ENCODE measurements at regions of chr6 and their contacts with region 1.

Region 1: GRCh38 chr6:24933868-24934401 is 1.8 kb downstream of the RIPOR2 start:
- DNase-seq: peak; percentile 68
- H3K4me3 Mint-ChIP-seq: peak overlapping the region; percentile 92
- H3K27ac Mint-ChIP-seq: peak overlapping the region; percentile 99
- H3K4me1 Mint-ChIP-seq: peaks cover 58% of the 10 kb centered on the region
- H3K27me3 Mint-ChIP-seq: no peaks in the 10 kb centered on the region

Region 2: GRCh38 chr6:24899997-24900325 is 34.0 kb before region 1 on chr6:
- CTCF ChIA-PET with region 1: interaction called, 16 read pairs
- POLR2A ChIA-PET with region 1: interaction called, 4 read pairs
- DNase-seq: peak; percentile 39
- H3K4me3 Mint-ChIP-seq: peak overlapping the region; percentile 33
- H3K27ac Mint-ChIP-seq: peak overlapping the region; percentile 66
- H3K4me1 Mint-ChIP-seq: peaks cover 82% of the 10 kb centered on the region
- H3K27me3 Mint-ChIP-seq: no peaks in the 10 kb centered on the region

Region 3: DNA sequence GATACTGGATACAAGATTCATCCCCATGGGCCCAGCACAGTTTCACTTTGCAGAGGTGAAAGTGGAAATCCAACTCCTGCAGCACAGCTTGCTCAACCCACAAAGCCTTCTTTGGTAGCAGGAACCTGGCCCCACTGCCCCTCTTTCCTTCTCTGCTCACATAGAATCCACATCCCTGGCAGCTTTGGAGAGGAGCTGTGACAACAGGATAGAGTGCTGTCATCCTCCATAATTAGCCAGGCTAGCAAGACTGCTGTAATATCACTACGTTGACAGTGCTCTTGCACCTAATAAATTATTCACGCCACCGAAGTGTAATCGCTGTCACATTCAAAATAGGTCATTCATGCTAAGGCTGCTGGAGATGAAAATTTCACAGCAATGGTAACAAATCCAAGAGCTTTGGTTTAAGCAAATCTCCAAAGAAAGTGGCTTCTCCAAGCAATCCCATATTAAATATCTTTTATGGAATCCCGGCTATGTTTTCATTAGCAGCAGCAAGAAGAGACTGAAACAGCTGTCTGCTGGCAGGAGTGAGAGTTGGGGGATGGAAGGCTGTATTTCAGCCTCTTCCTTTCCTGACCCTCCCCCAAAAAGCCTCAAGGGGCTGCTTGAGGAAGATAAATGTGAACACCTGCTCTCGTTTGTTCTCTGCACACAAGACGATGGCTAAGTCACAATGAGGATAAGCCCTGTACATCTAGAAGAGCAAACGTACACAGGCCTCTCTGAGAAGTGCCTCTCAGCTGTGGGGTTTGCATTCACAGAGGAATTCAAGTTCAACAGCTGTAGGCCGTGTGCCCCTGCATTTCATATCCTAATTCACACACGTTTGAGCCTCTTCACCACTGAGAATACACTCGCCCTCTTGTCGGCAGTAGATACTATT is 14.7 kb before region 1 on chr6:
- CTCF ChIA-PET with region 1: interaction called, 20 read pairs
- POLR2A ChIA-PET with region 1: interaction called, 7 read pairs
- DNase-seq: peak; percentile 39
- H3K4me3 Mint-ChIP-seq: peak overlapping the region; percentile 67
- H3K27ac Mint-ChIP-seq: peak overlapping the region; percentile 83
- H3K4me1 Mint-ChIP-seq: peaks cover 87% of the 10 kb centered on the region
- H3K27me3 Mint-ChIP-seq: no peaks in the 10 kb centered on the region

Region 4: DNA sequence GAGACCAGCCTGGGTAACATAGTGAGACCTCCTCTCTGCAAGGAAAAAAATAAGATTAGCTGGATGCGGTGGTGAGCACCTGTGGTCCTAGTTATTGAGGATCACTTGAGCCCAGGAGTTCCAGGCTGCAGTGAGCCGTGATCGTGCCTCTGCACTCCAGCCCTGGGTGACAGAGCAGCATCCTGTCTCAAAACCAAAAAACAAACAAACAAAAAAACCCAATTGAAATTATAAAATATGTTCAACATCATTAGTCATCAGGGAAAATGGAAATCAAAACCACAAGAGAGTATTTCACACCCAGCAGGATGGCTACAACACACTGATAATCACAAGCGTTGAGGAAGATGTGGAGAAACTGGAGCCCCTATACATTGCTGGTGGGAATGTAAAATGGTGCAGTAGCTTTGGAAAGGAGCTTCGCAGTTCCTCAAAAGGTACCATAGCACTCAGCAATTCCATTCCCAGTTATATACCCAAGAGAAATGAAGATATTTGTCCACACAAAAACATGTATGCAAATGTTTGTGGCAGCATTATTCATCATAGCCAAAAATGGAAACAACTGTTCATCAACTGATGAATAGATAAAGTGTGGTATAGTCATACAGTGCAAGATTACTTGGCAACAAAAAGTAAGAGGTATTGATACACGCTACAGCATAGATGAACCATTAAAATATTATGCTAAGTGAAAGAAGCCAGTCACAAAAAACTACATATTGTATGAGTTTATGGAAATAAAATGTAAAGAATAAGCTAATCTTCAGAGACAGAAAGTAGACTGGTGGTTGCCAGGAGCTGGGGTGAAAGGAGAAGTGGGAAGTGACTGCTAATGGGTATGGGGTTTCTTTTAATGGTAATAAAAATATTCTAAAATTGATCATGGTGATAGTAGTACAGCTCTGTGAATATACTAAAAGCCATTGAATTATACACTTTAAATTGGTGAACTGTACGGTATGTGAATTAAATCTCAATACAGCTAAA is 40.5 kb after region 1 on chr6:
- CTCF ChIA-PET with region 1: interaction called, 19 read pairs
- POLR2A ChIA-PET with region 1: no interaction called
- DNase-seq: no peak
- H3K4me3 Mint-ChIP-seq: no peak overlapping the region
- H3K27ac Mint-ChIP-seq: peak overlapping the region; percentile 84
- H3K4me1 Mint-ChIP-seq: peaks cover 36% of the 10 kb centered on the region
- H3K27me3 Mint-ChIP-seq: no peaks in the 10 kb centered on the region

Measured in activated CD4-positive, alpha-beta T cell treated with anti-CD3 and anti-CD28 coated beads, Interleukin-2, amount 10 ng/mL, durations not matched to agents 7 days and 5 days (primary cell).